Activated naive CD4-positive, alpha-beta T cell treated with anti-CD3 and anti-CD28 coated beads for 36 hours (primary cell): ENCODE measurements at regions of chr2 and their contacts with region 1.

Region 1: DNA sequence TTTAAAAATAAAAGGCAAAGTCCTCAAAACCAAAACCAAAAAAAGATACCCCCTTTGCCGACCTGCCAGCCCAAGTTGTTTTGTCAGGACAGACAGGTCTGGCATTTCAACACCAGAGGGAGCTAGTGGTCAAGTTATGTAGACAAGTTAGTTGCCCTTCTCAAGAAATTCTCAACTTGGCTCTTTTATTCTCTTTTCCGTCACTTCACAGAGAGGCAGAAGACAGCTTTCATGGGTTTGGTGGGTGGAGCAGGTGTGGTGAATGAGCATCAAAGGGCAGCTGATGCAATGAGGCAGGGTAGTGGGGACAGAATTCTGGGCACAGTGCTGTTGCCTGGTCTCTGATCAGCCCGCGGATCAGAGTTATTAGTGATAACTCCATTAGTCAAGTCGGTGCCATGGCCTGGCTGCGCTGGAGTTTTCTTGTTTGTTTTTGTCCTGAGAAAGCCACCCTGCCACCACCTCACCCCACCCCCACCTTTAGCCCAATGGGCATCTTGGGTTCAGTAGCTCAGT is 303.7 kb upstream of the EPAS1 start:
- DNase-seq: peak; percentile 79
- H3K4me3 Mint-ChIP-seq: no peak overlapping the region
- H3K27ac Mint-ChIP-seq: no peak overlapping the region
- H3K4me1 Mint-ChIP-seq: peaks cover 9% of the 10 kb centered on the region
- H3K27me3 Mint-ChIP-seq: no peaks in the 10 kb centered on the region

Region 2: DNA sequence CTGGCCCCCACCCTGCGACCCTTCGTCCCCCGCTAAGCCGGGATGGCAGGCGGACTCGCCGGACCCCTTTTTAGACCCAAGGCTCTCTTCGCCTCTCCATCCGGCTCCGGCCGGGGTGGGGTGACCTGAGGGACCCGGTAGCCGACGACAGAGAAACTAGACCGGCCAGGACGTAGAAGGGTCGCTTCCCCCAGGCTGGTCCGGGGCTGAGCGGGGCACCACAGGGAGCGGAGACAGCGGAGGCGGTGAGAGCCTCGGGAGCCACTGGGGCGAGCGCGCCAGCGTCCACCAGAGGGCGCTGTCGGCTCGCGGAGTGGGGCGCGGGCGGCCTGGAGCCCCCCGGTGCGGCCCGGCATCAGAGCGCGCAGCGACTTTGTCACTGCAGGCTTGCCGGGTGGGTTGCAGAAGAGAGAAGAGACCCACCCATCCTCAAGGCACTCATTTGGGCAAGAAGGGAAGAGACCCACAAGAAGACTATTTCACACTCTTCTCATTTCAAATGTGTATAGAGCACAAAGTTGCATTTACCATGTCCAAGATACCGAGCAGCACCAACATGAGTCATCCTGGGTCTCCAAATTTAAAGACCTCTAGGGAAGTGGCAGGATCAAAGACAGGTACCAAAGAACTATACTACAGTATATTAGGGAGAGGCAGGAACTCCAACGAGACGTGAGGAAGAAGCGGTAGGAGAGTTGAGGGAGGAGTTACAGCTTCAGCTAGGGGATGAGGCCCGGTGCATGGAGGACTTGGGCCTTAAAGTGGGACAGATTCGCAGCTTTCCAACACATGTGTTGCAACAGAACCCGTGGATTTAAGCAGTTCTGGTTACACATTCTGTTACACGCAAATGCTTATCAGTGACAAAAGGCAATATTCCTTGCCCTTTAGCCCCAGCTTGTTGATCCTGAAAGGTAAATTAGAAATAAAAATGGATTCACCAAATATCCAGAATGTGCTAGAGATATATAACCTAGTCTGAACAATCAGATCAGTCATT is 349.7 kb before region 1 on chr2:
- CTCF ChIA-PET with region 1: no interaction called
- intact Hi-C with region 1: loop called (anchors 5 kb)
- DNase-seq: peak; percentile 66
- H3K4me3 Mint-ChIP-seq: peak overlapping the region; percentile 36
- H3K27ac Mint-ChIP-seq: no peak overlapping the region
- H3K4me1 Mint-ChIP-seq: peaks cover 4% of the 10 kb centered on the region
- H3K27me3 Mint-ChIP-seq: peaks cover 22% of the 10 kb centered on the region

Region 3: GRCh38 chr2:45922571-45922988 is 71.0 kb before region 1 on chr2:
- CTCF ChIA-PET with region 1: no interaction called
- intact Hi-C with region 1: no loop called
- DNase-seq: no peak
- H3K4me3 Mint-ChIP-seq: no peak overlapping the region
- H3K27ac Mint-ChIP-seq: no peak overlapping the region
- H3K4me1 Mint-ChIP-seq: no peaks in the 10 kb centered on the region
- H3K27me3 Mint-ChIP-seq: no peaks in the 10 kb centered on the region

Region 4: DNA sequence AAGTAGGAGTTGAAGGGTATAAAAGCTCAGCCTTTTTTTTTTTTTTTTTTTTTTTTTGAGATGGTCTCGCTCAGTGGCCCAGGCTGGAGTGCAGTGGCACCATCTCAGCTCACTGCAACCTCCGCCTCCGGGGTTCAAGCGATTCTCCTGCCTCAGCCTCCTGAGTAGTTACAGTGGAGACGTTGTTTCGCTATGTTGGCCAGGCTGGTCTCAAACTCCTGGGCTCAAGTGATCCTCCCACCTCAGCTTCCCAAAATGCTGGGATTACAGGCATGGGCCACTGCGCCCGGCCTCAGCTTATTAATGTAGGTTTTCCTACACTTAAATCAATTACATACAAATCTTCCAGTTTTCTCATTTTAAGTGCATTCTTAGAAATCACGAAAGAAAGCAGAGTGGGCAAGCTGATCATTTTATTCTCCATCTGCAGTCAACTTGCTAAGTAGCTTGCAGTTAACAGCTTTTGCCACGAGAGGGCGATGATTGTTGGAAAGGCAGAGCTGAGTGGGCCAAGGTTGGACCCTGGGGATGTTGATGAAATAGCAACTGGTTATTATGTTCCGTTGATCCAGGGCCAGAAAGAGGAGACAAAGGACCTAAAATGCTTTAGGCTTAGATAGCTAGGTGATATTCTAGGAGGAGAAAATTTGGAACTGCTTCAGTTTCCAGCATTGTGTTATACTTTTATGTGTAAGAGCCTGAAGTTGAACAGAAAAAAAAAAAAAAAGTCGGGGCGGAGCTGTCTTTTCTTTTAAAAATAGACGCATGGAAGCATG is 69.3 kb after region 1 on chr2:
- CTCF ChIA-PET with region 1: interaction called, 9 read pairs
- intact Hi-C with region 1: loop called (anchors 1 kb)
- DNase-seq: peak; percentile 86
- H3K4me3 Mint-ChIP-seq: no peak overlapping the region
- H3K27ac Mint-ChIP-seq: no peak overlapping the region
- H3K4me1 Mint-ChIP-seq: peaks cover 10% of the 10 kb centered on the region
- H3K27me3 Mint-ChIP-seq: no peaks in the 10 kb centered on the region